Caco-2 (cell line): ENCODE measurements at regions of chr10 and their contacts with region 1.

Region 1: DNA sequence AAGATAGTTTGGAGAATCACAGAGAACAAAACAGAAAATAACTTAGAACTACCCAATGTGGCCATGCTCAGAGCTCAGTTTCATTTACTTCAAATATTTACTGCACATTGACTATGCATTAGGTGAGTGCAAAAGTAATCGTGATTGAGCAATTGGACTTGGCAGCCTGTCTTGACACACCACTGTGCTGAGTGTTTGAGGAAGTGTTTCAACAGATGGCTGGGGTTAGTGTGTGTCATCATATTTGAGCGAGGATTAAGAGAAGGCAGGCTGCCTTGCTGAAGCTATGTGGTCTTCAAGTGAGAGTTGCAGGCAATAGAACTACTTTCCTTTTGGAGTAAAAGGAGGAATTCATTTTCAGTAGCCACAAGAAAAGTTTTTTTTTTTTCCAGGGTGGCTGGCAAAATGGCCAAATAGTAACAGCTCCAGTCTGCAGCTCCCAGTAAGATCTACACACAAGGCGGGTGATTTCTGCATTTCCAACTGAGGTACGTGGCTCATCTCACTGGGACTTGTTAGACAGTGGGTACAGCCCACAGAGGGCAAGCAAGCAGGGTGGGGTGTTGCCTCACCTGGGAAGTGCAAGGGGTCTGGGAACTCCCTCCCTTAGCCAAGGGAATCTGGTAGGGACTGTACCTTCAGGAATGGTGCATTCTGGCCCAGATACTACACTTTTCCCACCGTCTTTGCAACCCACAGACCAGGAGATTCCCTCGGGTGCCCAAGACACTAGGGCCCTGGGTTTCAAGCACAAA is 37.6 kb downstream of the AKR1C4 start:
- DNase-seq: peak; percentile 64 to 79
- H3K4me3 ChIP-seq: no peak overlapping the region
- H3K4me3 Mint-ChIP-seq: no peak overlapping the region
- H3K27ac Mint-ChIP-seq: peak overlapping the region; percentile 34
- H3K4me1 ChIP-seq: no peaks in the 10 kb centered on the region; the same call in 1 of the 2 replicates
- H3K4me1 Mint-ChIP-seq: no peaks in the 10 kb centered on the region
- H3K27me3 ChIP-seq: no peaks in the 10 kb centered on the region
- H3K27me3 Mint-ChIP-seq: no peaks in the 10 kb centered on the region
- CTCF ChIP-seq: no peak

Region 2: DNA sequence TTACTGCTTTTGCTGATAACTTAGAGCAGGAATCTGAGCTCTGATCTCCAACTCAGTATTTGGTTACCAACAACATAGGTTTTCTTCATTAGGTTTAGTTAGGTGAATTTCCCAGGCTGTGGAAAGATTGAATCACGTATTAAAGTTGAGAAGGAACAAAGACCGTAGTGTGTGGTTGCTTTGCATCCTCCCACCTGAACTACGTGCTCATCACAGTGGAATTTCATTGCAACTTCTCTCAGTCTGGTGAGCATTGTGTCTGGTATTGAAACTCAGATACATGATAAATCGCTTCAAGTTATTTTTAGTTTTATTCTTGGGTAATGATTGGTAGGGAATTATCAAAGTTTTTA is 547.7 kb before region 1 on chr10:
- CTCF ChIA-PET with region 1: no interaction called
- POLR2A ChIA-PET with region 1: no interaction called
- intact Hi-C with region 1: no loop called
- DNase-seq: no peak
- H3K4me3 ChIP-seq: no peak overlapping the region
- H3K4me3 Mint-ChIP-seq: no peak overlapping the region
- H3K27ac Mint-ChIP-seq: no peak overlapping the region
- H3K4me1 ChIP-seq: no peaks in the 10 kb centered on the region
- H3K4me1 Mint-ChIP-seq: peaks cover 3% of the 10 kb centered on the region
- H3K27me3 ChIP-seq: no peaks in the 10 kb centered on the region
- H3K27me3 Mint-ChIP-seq: peaks cover 5% of the 10 kb centered on the region
- CTCF ChIP-seq: no peak

Region 3: GRCh38 chr10:5033061-5033770 is 201.1 kb before region 1 on chr10:
- CTCF ChIA-PET with region 1: no interaction called
- POLR2A ChIA-PET with region 1: no interaction called
- intact Hi-C with region 1: no loop called
- DNase-seq: no peak
- H3K4me3 ChIP-seq: no peak overlapping the region
- H3K4me3 Mint-ChIP-seq: no peak overlapping the region
- H3K27ac Mint-ChIP-seq: no peak overlapping the region
- H3K4me1 ChIP-seq: no peaks in the 10 kb centered on the region
- H3K4me1 Mint-ChIP-seq: no peaks in the 10 kb centered on the region
- H3K27me3 ChIP-seq: no peaks in the 10 kb centered on the region
- H3K27me3 Mint-ChIP-seq: no peaks in the 10 kb centered on the region
- CTCF ChIP-seq: no peak

Region 4: GRCh38 chr10:5199398-5199797 is 34.9 kb before region 1 on chr10:
- CTCF ChIA-PET with region 1: no interaction called
- POLR2A ChIA-PET with region 1: interaction called, 7 read pairs
- intact Hi-C with region 1: loop called (anchors 2 kb)
- DNase-seq: no peak
- H3K4me3 ChIP-seq: no peak overlapping the region
- H3K4me3 Mint-ChIP-seq: no peak overlapping the region
- H3K27ac Mint-ChIP-seq: no peak overlapping the region
- H3K4me1 ChIP-seq: peaks cover 23% of the 10 kb centered on the region
- H3K4me1 Mint-ChIP-seq: peaks cover 11% of the 10 kb centered on the region
- H3K27me3 ChIP-seq: no peaks in the 10 kb centered on the region
- H3K27me3 Mint-ChIP-seq: no peaks in the 10 kb centered on the region
- CTCF ChIP-seq: no peak

Region 5: GRCh38 chr10:5265139-5265538 is 30.9 kb after region 1 on chr10:
- CTCF ChIA-PET with region 1: no interaction called
- POLR2A ChIA-PET with region 1: no interaction called
- intact Hi-C with region 1: loop called (anchors 1 kb)
- DNase-seq: no peak
- H3K4me3 ChIP-seq: no peak overlapping the region
- H3K4me3 Mint-ChIP-seq: no peak overlapping the region
- H3K27ac Mint-ChIP-seq: no peak overlapping the region
- H3K4me1 ChIP-seq: peaks cover 9% of the 10 kb centered on the region; the same call in 1 of the 2 replicates
- H3K4me1 Mint-ChIP-seq: no peaks in the 10 kb centered on the region
- H3K27me3 ChIP-seq: no peaks in the 10 kb centered on the region
- H3K27me3 Mint-ChIP-seq: no peaks in the 10 kb centered on the region
- CTCF ChIP-seq: no peak

Region 6: GRCh38 chr10:5283305-5284158 is 49.2 kb after region 1 on chr10:
- CTCF ChIA-PET with region 1: no interaction called
- POLR2A ChIA-PET with region 1: no interaction called
- intact Hi-C with region 1: loop called (anchors 2 kb)
- DNase-seq: peak; percentile 81 to 83
- H3K4me3 ChIP-seq: no peak overlapping the region
- H3K4me3 Mint-ChIP-seq: peak overlapping the region; percentile 50
- H3K27ac Mint-ChIP-seq: peak overlapping the region; percentile 22
- H3K4me1 ChIP-seq: no peaks in the 10 kb centered on the region; the same call in 1 of the 2 replicates
- H3K4me1 Mint-ChIP-seq: peaks cover 7% of the 10 kb centered on the region
- H3K27me3 ChIP-seq: no peaks in the 10 kb centered on the region
- H3K27me3 Mint-ChIP-seq: peaks cover 7% of the 10 kb centered on the region
- CTCF ChIP-seq: peak; percentile 88 to 92